Activated B cell treated with CpG ODN at 0.5 μM for 24 hours (primary cell): ENCODE measurements at regions of chr19 and their contacts with region 1.

Region 1: GRCh38 chr19:10928525-10929401 is at the starts of genes TIMM29 and YIPF2:
- DNase-seq: peak; percentile 80
- ATAC-seq: peak; percentile 85
- H3K4me3 Mint-ChIP-seq: peak within 1 kb of the TSS; percentile 92
- H3K27ac Mint-ChIP-seq: peak within 1 kb of the TSS; percentile 81
- H3K4me1 Mint-ChIP-seq: peaks cover 20% of the 10 kb centered on the region
- H3K27me3 Mint-ChIP-seq: no peaks in the 10 kb centered on the region
- CTCF ChIP-seq: no peak
- total RNA-seq, gene TIMM29: 16.6 and 19.5 TPM in 2 replicates
- total RNA-seq, gene YIPF2: 23.0 and 23.9 TPM in 2 replicates

Region 2: GRCh38 chr19:10870955-10871603 is 57.7 kb before region 1 on chr19 and contains the start of gene CARM1:
- CTCF ChIA-PET with region 1: interaction called, 3 read pairs
- POLR2A ChIA-PET with region 1: interaction called, 5 read pairs
- intact Hi-C with region 1: loop called (anchors 1 kb)
- DNase-seq: peak; percentile 100
- ATAC-seq: peak; percentile 84
- H3K4me3 Mint-ChIP-seq: peak within 1 kb of the TSS; percentile 83
- H3K27ac Mint-ChIP-seq: peak within 1 kb of the TSS; percentile 88
- H3K4me1 Mint-ChIP-seq: peaks cover 44% of the 10 kb centered on the region
- H3K27me3 Mint-ChIP-seq: no peaks in the 10 kb centered on the region
- CTCF ChIP-seq: no peak
- total RNA-seq, gene CARM1: 32.3 and 39.1 TPM in 2 replicates

Region 3: GRCh38 chr19:10878253-10878652 is 50.5 kb before region 1 on chr19:
- CTCF ChIA-PET with region 1: no interaction called
- POLR2A ChIA-PET with region 1: interaction called, 5 read pairs
- intact Hi-C with region 1: loop called (anchors 1 kb)
- DNase-seq: no peak
- ATAC-seq: peak; percentile 13
- H3K4me3 Mint-ChIP-seq: peak overlapping the region; percentile 55
- H3K27ac Mint-ChIP-seq: peak overlapping the region; percentile 84
- H3K4me1 Mint-ChIP-seq: peaks cover 39% of the 10 kb centered on the region
- H3K27me3 Mint-ChIP-seq: no peaks in the 10 kb centered on the region
- CTCF ChIP-seq: no peak

Region 4: GRCh38 chr19:11125994-11126685 is 197.4 kb after region 1 on chr19:
- CTCF ChIA-PET with region 1: no interaction called
- POLR2A ChIA-PET with region 1: no interaction called
- intact Hi-C with region 1: no loop called
- DNase-seq: peak; percentile 54
- ATAC-seq: peak; percentile 63
- H3K4me3 Mint-ChIP-seq: no peak overlapping the region
- H3K27ac Mint-ChIP-seq: no peak overlapping the region
- H3K4me1 Mint-ChIP-seq: peaks cover 7% of the 10 kb centered on the region
- H3K27me3 Mint-ChIP-seq: no peaks in the 10 kb centered on the region
- CTCF ChIP-seq: peak; percentile 56

Region 5: DNA sequence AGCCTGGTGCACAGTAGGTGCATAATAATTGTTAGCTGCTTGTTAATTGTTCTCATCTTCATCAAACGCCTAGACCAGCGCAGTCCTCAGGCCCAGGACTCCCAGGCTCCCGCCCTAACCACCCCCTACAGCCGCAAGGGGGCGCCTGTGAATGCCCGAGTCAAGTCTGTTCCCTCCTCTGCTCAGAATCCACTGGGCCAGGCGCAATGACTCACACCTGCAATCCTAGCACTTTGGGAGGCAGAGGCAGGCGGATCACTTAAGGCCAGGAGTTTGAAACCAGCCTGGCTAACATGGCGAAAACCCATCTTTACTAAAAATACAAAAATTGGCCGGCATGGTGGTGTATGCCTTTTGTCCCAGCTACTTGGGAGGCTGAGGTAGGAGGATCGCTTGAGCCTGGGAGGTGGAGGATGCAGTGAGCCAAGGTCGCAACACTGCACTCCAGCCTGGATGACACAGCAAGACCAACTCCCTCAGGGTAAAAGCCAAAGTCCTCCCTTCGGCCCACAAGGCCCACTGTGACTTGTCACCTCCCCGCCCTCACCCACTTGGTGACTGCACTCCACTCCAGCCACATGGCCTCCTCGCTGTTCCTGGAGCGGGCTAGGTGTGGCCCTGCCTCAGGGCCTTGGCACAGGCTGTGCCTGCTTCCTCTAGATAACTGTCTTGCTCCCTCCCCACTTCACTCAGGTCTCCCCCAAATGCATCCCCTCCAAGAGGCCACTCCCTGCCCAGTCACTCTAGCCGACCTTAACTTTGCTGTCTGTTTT is 567.8 kb after region 1 on chr19:
- CTCF ChIA-PET with region 1: no interaction called
- POLR2A ChIA-PET with region 1: interaction called, 10 read pairs
- intact Hi-C with region 1: no loop called
- DNase-seq: peak; percentile 56
- ATAC-seq: peak; percentile 84
- H3K4me3 Mint-ChIP-seq: no peak overlapping the region
- H3K27ac Mint-ChIP-seq: no peak overlapping the region
- H3K4me1 Mint-ChIP-seq: no peaks in the 10 kb centered on the region
- H3K27me3 Mint-ChIP-seq: no peaks in the 10 kb centered on the region
- CTCF ChIP-seq: no peak